ENCODE measurements at regions of chr17 and their contacts with region 1.

Region 1: DNA sequence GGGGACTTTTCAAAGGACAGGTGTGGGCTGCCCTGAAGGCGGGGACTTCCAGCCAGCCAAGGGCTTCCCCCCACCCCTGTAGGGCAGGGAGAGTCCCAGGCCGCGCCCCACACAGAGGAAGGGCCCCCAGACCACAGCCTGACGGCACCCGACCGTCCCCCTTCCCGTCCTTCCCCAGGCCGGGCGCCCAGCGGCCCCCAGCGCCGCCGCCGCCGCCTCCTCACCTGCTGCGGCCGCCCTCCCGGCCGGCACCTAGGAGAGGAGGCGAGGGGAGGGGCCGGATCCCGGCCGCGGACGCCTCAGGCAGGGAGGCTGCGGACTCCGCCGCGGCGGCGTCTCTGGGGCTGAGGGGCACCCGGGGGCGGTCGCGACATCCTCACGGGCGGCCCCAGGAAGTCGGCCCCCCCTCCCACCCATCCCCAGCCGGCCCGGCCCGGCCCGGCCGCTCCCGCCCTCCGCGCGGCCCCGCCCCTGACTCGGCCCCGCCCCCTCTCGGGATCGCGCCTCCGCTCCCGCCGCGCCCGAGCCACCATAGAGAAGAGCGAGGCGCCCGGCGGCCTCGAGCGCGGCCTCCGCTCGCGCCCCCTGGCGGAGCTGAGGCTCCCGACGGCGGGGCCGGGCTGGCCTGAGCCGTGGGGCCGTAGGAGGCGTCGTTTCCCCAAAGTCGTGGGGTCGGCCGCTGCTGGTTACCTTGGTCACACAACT is 25.5 kb upstream of the RFFL start:
- DNase-seq: peak; percentile 89
- H3K4me3 Mint-ChIP-seq: peak overlapping the region; percentile 86
- H3K27ac Mint-ChIP-seq: peak overlapping the region; percentile 96
- H3K4me1 Mint-ChIP-seq: peaks cover 48% of the 10 kb centered on the region
- H3K27me3 Mint-ChIP-seq: no peaks in the 10 kb centered on the region

Region 2: GRCh38 chr17:34961093-34961911 is 127.7 kb before region 1 on chr17 and contains the starts of genes CCT6B and ZNF830:
- CTCF ChIA-PET with region 1: no interaction called
- intact Hi-C with region 1: loop called (anchors 1 kb)
- DNase-seq: peak; percentile 97
- H3K4me3 Mint-ChIP-seq: peak within 1 kb of the TSS; percentile 99
- H3K27ac Mint-ChIP-seq: peak within 1 kb of the TSS; percentile 98
- H3K4me1 Mint-ChIP-seq: peaks cover 22% of the 10 kb centered on the region
- H3K27me3 Mint-ChIP-seq: no peaks in the 10 kb centered on the region
- total RNA-seq, gene CCT6B: 0.69 to 1.5 TPM
- total RNA-seq, gene ZNF830: 17.6 to 18.7 TPM

Region 3: DNA sequence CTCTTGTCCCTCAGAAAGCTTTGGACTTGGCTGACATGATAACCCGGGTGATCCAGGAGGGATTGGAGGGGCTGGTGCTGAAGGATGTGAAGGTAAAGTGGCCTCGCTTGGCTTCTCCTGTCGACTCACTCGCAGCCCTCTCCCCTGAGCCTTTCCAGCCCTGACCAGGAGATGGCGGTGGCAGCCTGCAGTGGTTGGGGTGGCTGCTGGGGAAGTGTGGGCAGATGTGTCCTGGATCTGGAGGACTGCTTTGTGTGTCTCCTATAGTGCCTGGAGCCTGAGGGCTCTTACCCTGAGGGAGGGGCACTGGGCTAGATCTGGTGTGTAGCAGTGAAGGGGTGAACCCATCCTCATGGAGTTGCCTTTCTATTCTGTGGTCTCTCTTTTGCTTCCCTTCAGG is 90.8 kb before region 1 on chr17:
- CTCF ChIA-PET with region 1: interaction called, 25 read pairs
- intact Hi-C with region 1: loop called (anchors 1 kb)
- DNase-seq: peak; percentile 88
- H3K4me3 Mint-ChIP-seq: no peak overlapping the region
- H3K27ac Mint-ChIP-seq: peak overlapping the region; percentile 83
- H3K4me1 Mint-ChIP-seq: peaks cover 6% of the 10 kb centered on the region
- H3K27me3 Mint-ChIP-seq: no peaks in the 10 kb centered on the region

Region 4: DNA sequence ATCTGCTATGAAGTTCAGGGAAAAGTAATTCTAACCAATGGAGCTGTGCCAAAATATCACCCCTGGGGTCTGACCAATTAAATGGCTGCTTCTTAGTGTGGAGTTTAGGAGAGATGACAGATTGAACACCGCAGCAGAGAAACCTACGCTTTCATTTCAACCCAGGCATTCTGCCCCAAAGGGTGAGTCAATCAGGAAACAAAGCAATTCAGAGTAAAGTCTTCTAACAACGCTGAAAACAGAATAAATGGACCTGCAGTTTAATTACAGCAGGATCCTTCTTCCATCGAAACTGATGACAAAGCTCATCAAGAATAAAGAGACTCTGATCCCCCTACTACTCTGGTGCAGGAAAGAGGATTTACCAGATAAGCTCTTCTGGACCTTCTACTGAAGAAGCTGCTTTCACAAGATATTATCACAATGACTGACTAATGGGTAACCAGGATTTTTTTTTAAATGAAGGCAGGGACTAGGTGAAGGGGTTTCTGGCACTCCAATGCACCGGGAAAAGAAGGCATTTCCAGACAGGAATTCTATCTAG is 42.2 kb before region 1 on chr17:
- CTCF ChIA-PET with region 1: interaction called, 10 read pairs
- intact Hi-C with region 1: loop called (anchors 1 kb)
- DNase-seq: peak; percentile 84
- H3K4me3 Mint-ChIP-seq: peak overlapping the region; percentile 77
- H3K27ac Mint-ChIP-seq: peak overlapping the region; percentile 94
- H3K4me1 Mint-ChIP-seq: peaks cover 73% of the 10 kb centered on the region
- H3K27me3 Mint-ChIP-seq: no peaks in the 10 kb centered on the region

Region 5: GRCh38 chr17:35073991-35074627 is 14.9 kb before region 1 on chr17:
- CTCF ChIA-PET with region 1: interaction called, 9 read pairs
- intact Hi-C with region 1: loop called (anchors 1 kb)
- DNase-seq: peak; percentile 45
- H3K4me3 Mint-ChIP-seq: peak overlapping the region; percentile 36
- H3K27ac Mint-ChIP-seq: peak overlapping the region; percentile 87
- H3K4me1 Mint-ChIP-seq: peaks cover 61% of the 10 kb centered on the region
- H3K27me3 Mint-ChIP-seq: no peaks in the 10 kb centered on the region

Region 6: DNA sequence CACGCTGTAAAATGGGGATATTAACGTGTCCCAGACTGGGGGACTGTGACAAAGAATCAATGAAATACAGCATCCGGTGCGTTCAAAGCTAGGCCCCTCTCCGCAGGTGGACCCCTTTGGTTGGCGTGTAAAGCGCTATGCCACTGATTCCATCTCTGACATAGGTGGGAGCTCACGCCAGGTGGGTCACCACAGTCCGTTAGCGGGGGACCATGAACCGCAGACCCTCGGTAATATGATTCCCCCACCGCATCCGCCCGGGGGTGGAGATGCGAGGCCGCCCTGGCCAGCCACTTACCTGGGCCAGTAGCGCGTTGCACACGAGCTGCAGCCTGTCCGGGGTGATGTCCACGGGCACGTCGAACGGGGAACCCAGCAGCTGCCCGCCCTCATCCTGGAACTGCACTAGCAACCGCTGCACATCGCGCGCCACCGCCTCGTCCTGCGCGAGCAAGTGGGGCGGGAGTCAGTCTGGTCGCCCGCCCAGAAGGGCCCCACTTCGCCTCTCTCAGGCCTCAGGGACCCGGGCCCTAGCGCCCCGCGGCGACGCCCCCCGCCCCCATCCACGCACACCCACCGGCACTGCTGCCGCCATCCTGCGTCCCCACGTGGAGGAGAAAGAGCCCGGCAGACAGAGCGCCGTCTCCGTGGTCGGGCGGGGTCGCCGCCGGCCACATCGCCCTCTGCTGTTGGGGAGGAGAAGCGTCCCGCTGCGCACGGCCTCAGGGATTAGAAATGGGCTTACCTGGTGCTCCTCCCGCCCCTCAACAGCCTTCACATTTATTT is 52.8 kb after region 1 on chr17 and contains the start of gene NLE1:
- CTCF ChIA-PET with region 1: interaction called, 3 read pairs
- intact Hi-C with region 1: loop called (anchors 1 kb)
- DNase-seq: peak; percentile 89
- H3K4me3 Mint-ChIP-seq: peak within 1 kb of the TSS; percentile 77
- H3K27ac Mint-ChIP-seq: peak within 1 kb of the TSS; percentile 82
- H3K4me1 Mint-ChIP-seq: peaks cover 25% of the 10 kb centered on the region
- H3K27me3 Mint-ChIP-seq: no peaks in the 10 kb centered on the region
- total RNA-seq, gene NLE1: 33.0 to 35.2 TPM